ENCODE measurements at regions of chr12 and their contacts with region 1.

Region 1: DNA sequence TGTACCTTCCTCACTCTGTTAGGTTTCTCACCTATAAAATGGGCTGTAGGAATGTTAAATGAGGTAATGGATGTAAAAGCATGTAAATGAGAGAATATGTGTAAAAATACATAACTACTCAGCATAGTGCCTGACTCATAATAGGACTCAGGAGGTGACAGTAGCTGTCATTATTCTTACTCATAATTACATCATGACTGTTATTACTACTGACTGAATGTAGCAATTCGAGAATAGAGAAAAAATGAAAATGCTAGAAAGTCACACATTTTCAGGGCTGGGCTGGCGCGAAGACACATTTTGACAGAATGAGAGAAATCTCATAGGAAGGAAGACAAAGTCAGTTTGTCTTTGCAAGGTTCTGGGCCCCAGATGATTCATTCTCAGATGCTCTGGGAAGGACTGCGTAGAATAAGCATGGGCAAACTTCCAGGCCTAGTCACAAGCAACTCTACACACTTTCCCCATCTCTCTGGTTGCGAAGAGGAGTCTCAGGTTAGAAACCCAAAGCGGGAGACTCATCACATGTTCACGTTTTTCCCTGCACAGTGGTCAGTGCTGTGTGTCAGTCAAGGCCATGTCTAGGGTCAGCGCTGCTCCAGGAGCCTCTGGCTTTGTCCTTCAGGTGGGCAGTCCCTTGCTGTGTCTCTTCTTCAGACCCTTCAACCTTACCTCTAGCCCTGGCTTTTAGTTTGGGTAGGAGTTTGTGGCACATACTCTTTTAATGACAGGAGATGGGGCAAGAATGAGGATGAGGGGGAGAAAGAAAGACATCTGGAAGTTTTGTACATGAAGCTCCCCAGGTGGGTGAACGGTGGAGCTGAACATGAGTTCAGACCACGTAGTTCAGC is 8.4 kb downstream of the GPRC5A start:
- DNase-seq: peak; percentile 94
- H3K4me3 ChIP-seq: peak overlapping the region; percentile 31; the same call in 1 of the 2 replicates
- H3K27ac ChIP-seq: peak overlapping the region; percentile 92
- H3K27me3 ChIP-seq: no peaks in the 10 kb centered on the region
- CTCF ChIP-seq: no peak

Region 2: DNA sequence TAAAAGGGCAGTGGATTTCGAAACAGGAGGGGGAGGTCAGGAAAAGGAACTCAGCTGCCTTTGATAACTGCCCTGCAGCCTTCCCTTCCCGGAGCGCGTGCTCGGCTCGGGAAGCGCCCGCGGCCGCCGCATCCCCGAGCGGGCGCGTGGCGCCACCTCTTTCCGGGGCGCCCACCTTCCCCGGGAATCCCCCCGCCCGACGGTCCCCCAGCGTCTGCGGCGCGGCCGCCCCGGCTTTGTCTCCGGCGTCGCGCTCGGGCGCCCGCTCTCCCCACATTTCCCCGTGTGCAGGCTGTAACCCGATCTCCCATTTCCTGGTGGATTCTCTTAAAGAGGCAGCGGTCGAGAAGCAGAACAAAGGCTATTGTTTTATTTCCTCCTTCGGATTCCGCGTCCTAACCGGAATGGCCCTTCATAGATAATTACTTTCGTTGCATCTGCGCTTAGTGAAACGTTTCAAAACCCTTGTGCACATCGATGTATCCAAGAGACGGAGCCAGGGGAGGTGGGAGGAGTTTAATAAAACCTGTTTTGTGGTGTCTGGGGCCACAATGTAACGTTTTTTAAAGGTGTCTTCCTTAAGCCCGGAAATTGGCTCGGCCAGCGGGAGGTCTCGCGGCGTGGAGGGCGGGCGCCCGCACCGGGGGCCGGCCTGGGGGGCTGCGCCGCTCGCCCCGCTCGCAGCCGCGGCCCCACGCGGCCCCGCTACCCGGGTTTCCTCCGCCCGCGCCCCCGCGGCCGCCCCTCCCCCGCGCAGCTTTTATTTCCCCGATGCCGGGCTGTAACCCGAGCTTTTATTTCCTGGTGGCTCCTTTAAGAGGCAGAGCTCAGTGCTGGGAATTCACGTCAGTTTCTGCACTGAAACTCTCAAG is 1250.7 kb before region 1 on chr12 and contains the start of gene ETV6:
- CTCF ChIA-PET with region 1: no interaction called
- POLR2A ChIA-PET with region 1: no interaction called
- DNase-seq: peak; percentile 76
- H3K4me3 ChIP-seq: peak within 1 kb of the TSS; percentile 97
- H3K27ac ChIP-seq: peak within 1 kb of the TSS; percentile 99
- H3K27me3 ChIP-seq: no peaks in the 10 kb centered on the region
- CTCF ChIP-seq: no peak
- polyA plus RNA-seq, gene ETV6: 7.9 and 8.7 TPM in 2 replicates

Region 3: GRCh38 chr12:12081836-12082497 is 817.8 kb before region 1 on chr12:
- CTCF ChIA-PET with region 1: no interaction called
- POLR2A ChIA-PET with region 1: interaction called, 10 read pairs
- DNase-seq: no peak
- H3K4me3 ChIP-seq: no peak overlapping the region
- H3K27ac ChIP-seq: no peak overlapping the region
- H3K27me3 ChIP-seq: peaks cover under 1% of the 10 kb centered on the region
- CTCF ChIP-seq: peak; percentile 17; the same call in 1 of the 2 replicates

Region 4: DNA sequence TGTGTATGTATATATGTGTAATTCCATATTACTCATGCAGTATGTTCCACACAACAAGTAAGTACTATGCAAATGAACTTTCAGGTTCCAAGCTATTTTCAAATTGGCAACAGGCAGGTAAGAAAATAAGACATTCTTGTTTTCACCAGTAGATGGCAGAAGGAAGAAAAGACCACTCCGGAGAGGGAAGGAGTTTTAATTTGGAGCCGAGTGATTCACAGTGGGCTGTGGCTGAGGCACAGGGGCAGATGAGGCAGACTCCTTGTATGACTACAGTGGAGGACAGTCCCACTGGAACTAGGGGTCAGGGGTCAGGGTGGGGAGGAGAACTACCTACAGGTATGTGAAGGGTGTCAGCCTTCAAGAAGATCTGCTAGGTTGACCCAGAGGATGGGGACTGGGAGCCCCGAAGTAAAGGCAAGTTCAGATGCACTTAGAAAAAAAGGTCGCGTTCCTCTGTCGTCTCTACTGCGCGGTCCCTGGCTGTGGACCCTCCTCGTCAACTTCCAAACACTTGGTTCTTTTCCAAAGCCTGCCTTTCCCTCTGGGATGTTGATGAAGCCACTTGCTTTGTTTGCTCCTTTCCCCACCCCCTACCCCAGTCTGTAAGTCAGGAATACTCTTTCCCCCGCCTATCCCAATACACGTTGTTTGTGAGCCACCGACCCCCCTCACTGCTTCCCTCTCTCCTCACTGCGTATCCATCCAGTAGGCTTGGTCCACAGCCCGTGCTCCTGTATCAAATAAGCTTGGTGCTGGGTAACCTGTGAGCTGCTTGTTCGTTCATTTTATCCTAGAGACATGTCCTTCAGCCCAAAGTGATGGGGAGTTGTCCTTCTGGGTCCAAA is 62.5 kb before region 1 on chr12:
- CTCF ChIA-PET with region 1: interaction called, 18 read pairs
- POLR2A ChIA-PET with region 1: interaction called, 3 read pairs
- DNase-seq: peak; percentile 44
- H3K4me3 ChIP-seq: no peak overlapping the region
- H3K27ac ChIP-seq: peak overlapping the region; percentile 47
- H3K27me3 ChIP-seq: no peaks in the 10 kb centered on the region
- CTCF ChIP-seq: peak; percentile 66